Activated CD8-positive, alpha-beta memory T cell treated with anti-CD3 and anti-CD28 coated beads, Interleukin-2, amount 10 ng/mL, durations not matched to agents 7 days and 5 days (primary cell): ENCODE measurements at regions of chr6 and their contacts with region 1.

Region 1: GRCh38 chr6:125956506-125957390 is at the start of gene HINT3:
- DNase-seq: peak; percentile 98
- ATAC-seq: peak; percentile 93
- H3K4me3 Mint-ChIP-seq: no peak within 1 kb of the TSS
- H3K27ac Mint-ChIP-seq: peak within 1 kb of the TSS; percentile 76
- H3K4me1 Mint-ChIP-seq: peaks cover 10% of the 10 kb centered on the region
- H3K27me3 Mint-ChIP-seq: peaks cover 6% of the 10 kb centered on the region
- total RNA-seq, gene HINT3: 8.7 to 9.3 TPM

Region 2: DNA sequence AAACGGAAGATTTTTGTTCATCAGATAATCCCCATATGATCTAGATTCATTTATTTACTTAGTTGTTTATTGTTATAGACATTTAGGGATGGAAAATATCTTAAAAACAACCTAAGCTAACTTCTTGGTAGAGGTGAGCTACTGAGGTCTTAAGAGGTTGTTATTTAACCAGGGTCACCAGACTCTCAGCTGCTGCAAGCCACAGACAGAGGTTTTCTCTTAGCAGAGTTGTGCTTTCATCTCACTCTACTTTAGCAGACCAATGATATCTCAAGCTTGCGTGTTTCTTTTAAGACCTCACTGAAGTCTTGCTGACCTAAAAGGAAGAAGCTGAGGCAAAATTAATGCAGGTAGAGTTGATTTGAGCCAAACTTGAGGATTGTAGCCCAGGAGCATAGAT is 122.4 kb before region 1 on chr6:
- CTCF ChIA-PET with region 1: interaction called, 12 read pairs
- DNase-seq: no peak
- ATAC-seq: peak; percentile 52
- H3K4me3 Mint-ChIP-seq: no peak overlapping the region
- H3K27ac Mint-ChIP-seq: peak overlapping the region; percentile 47
- H3K4me1 Mint-ChIP-seq: peaks cover 48% of the 10 kb centered on the region
- H3K27me3 Mint-ChIP-seq: no peaks in the 10 kb centered on the region

Region 3: GRCh38 chr6:125906158-125906998 is 50.4 kb before region 1 on chr6:
- CTCF ChIA-PET with region 1: interaction called, 13 read pairs
- DNase-seq: peak; percentile 54
- ATAC-seq: no peak
- H3K4me3 Mint-ChIP-seq: no peak overlapping the region
- H3K27ac Mint-ChIP-seq: no peak overlapping the region
- H3K4me1 Mint-ChIP-seq: peaks cover 56% of the 10 kb centered on the region
- H3K27me3 Mint-ChIP-seq: no peaks in the 10 kb centered on the region

Region 4: DNA sequence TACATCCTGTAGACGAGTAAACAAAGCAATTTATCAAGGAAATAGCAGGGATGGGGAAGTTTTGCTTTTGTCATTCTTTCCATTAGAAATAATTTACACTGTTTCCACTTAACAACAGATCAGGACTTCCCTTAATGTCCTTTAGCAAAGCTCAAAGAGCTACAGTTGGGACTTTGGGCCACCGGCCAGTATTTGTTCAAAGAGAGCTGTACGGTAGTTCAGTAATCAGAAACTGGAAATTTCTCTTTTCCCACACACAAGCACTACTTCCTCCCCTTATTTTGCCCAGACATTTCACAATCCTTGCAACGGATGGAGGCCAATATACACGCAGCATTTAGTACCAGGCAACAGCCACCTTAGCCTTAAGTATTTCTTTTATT is 12.3 kb before region 1 on chr6:
- CTCF ChIA-PET with region 1: interaction called, 17 read pairs
- DNase-seq: no peak
- ATAC-seq: no peak
- H3K4me3 Mint-ChIP-seq: no peak overlapping the region
- H3K27ac Mint-ChIP-seq: no peak overlapping the region
- H3K4me1 Mint-ChIP-seq: peaks cover 22% of the 10 kb centered on the region
- H3K27me3 Mint-ChIP-seq: peaks cover 16% of the 10 kb centered on the region

Region 5: DNA sequence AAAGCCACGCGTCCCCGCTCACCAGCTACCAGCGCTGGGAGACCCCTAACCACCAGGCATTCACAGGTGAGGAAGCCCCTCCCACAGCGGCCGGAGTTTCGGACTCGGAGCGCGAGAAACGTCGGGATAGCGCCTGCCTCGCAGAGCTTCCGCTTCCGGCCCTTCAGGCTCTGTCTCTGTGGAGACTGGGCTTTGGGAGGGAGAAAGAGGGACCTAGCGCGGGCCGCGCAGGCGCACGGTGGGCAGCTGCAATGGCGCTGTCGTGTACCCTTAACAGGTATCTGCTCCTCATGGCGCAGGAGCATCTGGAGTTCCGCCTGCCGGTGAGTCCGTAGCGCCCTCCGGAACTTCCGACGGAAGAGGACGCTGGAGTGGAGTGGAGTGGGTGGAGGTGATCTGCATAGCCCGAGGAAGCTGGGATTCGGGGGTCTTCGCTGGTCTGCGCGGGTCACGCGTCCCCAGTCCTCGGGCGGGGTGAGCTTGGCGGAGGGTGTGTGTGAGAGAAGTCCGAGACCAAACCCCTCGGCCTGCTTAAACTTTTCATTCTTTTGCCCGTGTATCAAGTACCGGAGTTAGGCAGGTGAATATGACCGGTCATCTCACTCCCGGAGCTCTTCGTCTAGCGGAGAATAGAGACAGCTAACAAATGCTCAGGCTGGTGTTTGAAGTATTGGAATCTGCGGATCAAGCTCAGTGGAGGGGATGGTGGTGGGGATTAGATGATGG is 29.7 kb after region 1 on chr6 and contains the start of gene TRMT11:
- CTCF ChIA-PET with region 1: interaction called, 29 read pairs
- DNase-seq: peak; percentile 87
- ATAC-seq: peak; percentile 99
- H3K4me3 Mint-ChIP-seq: peak within 1 kb of the TSS; percentile 38
- H3K27ac Mint-ChIP-seq: no peak within 1 kb of the TSS
- H3K4me1 Mint-ChIP-seq: peaks cover 18% of the 10 kb centered on the region
- H3K27me3 Mint-ChIP-seq: no peaks in the 10 kb centered on the region
- total RNA-seq, gene TRMT11: 20.6 to 26.4 TPM